ENCODE measurements at regions of chr1 and their contacts with region 1.

Region 1: GRCh38 chr1:76640092-76640491 is 227.2 kb upstream of the ST6GALNAC5 start:
- DNase-seq: no peak
- H3K4me3 Mint-ChIP-seq: no peak overlapping the region
- H3K27ac Mint-ChIP-seq: no peak overlapping the region
- H3K4me1 Mint-ChIP-seq: no peaks in the 10 kb centered on the region
- H3K27me3 Mint-ChIP-seq: no peaks in the 10 kb centered on the region

Region 2: DNA sequence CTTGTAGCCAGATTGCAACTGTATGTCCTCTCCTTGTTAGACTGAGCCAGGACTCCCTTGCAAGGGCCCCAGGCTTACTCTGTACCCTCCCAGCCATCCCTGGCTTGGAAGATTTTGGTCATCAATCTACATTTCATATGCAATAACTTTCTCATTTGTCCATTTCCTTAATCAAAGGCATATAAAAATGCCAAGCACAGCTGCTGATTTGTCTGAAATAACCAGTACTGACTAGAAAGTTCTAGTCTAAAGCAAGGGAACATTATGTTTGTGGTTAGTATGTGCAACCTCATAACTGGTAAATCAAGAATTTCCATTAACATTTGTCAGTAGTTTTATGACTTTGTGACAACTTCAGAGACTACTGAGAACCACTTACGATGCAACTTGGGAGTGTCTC is 195.3 kb before region 1 on chr1:
- CTCF ChIA-PET with region 1: no interaction called
- POLR2A ChIA-PET with region 1: no interaction called
- intact Hi-C with region 1: no loop called
- DNase-seq: no peak
- H3K4me3 Mint-ChIP-seq: no peak overlapping the region
- H3K27ac Mint-ChIP-seq: no peak overlapping the region
- H3K4me1 Mint-ChIP-seq: peaks cover 8% of the 10 kb centered on the region
- H3K27me3 Mint-ChIP-seq: no peaks in the 10 kb centered on the region

Region 3: DNA sequence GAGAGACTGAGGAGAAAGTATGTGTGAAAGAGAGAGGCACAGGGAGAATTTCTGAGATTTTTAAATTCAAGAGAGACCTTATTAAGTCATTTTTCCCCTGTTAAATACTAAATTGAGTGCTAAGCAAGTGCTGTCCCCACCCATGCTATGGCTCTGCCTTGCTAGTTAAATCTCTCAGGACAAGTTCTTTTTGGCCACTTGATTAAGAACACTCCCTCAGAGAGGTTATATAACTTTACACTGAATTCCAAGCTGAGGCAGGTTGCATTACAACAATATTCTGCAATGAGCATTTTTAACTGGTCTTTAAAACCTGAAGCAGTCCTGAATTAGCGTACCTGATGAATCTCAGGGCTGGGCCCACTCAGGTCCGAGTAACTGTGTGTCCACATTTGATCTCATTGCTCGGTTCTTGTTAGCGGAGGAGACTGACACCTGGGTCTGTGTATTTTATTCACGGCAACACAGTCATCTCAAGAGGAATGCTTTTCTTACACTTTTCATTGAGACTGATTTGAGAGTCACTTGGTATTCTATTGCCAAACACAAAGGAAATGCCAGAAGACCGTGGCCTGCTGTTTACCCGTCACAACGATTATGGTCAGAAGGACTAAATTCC is 39.6 kb after region 1 on chr1:
- CTCF ChIA-PET with region 1: no interaction called
- POLR2A ChIA-PET with region 1: no interaction called
- intact Hi-C with region 1: loop called (anchors 1 kb)
- DNase-seq: no peak
- H3K4me3 Mint-ChIP-seq: no peak overlapping the region
- H3K27ac Mint-ChIP-seq: no peak overlapping the region
- H3K4me1 Mint-ChIP-seq: no peaks in the 10 kb centered on the region
- H3K27me3 Mint-ChIP-seq: no peaks in the 10 kb centered on the region